H1 (cell line): ENCODE measurements at regions of chr9 and their contacts with region 1.

Region 1: GRCh38 chr9:133375724-133376654 is at the starts of genes STKLD1 and SURF4:
- DNase-seq: peak; percentile 81 to 99
- H3K4me3 ChIP-seq: peak within 1 kb of the TSS; percentile 70 to 87 (median 74)
- H3K27ac ChIP-seq: peak within 1 kb of the TSS; percentile 80
- H3K4me1 ChIP-seq: peaks cover 0 to 5% (median 0%) of the 10 kb centered on the region in 4 experiments; a peak in 1 of 7 replicates
- H3K27me3 ChIP-seq: peaks cover 0 to 11% (median 6%) of the 10 kb centered on the region in 4 experiments; a peak in 5 of 7 replicates
- CTCF ChIP-seq: no peak
- EP300 ChIP-seq: peak in 1 of 2 experiments; percentile 52; a peak in 1 of 3 replicates
- POLR2A ChIP-seq: peak in 1 of 2 experiments; percentile 82; a peak in 2 of 3 replicates
- RAD21 ChIP-seq: no peak
- total RNA-seq, gene STKLD1: not detected in 2 replicates
- total RNA-seq, gene SURF4: 167 and 182 TPM in 2 replicates

Region 2: DNA sequence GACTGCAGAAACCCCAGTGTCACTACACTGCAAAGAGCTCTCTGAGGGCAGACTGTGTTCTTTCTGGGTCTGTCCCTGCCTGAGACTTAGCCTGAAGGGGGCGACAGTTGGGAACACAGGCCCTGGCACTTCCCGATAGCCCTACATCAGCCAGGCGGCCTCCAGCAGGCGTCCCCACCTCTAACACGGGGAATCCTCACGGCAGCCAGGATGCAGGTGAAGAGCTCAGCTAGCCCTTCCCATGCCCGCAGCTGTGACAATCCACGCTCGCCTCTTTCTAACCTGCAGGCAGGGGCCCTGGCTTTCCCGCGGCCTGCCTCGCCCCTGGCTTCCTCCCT is 34.0 kb before region 1 on chr9:
- CTCF ChIA-PET with region 1: interaction called, 22 read pairs
- POLR2A ChIA-PET with region 1: interaction called, 461 read pairs
- DNase-seq: peak in 1 of 2 experiments; percentile 76
- H3K4me3 ChIP-seq: no peak overlapping the region
- H3K27ac ChIP-seq: no peak overlapping the region
- H3K4me1 ChIP-seq: peaks cover 0 to 7% (median 5%) of the 10 kb centered on the region in 4 experiments; a peak in 5 of 7 replicates
- H3K27me3 ChIP-seq: no peaks in the 10 kb centered on the region
- CTCF ChIP-seq: peak in 2 of 3 experiments; percentile 81 to 86; a peak in 3 of 4 replicates
- EP300 ChIP-seq: no peak
- POLR2A ChIP-seq: no peak
- RAD21 ChIP-seq: peak; percentile 19 to 33; a peak in 3 of 4 replicates

Region 3: DNA sequence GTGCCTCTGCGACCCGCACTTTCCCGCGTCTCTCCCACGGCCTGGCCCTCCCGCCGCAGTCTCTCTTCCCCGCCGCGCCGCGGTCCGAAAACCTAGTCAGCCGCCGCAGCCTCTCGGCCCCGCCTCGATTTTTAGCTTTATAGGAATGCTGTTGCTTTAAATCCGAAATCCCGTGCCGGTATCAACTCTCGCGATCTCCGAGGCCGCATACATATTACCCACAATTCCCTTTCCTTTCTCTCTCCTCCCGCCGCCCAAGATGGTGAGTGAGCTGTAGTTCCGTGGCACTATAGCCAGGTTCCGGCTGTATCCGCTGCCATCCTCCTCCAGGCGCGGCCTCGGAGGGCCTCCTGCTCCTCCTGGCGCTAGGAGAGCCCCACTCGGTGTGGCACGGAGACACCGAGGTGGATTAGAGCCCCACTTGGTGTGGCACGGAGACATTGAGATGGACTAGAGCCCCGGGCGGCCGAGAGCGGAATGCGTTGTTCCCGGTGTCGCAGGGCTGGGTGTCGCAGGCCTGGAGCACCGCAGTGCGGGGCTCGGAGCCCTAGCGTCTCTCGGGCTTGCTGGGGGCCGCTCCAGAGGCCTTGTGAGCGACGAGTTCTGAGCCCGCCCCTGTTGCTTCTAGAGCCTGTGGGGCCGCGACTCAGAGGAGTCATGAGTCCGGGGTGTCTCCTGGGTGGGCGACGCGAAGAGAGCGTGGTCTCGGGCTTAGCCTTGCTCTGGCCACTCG is 27.8 kb before region 1 on chr9 and contains the starts of genes MED22 and RPL7A:
- CTCF ChIA-PET with region 1: interaction called, 22 read pairs
- POLR2A ChIA-PET with region 1: interaction called, 461 read pairs
- DNase-seq: peak; percentile 77 to 93
- H3K4me3 ChIP-seq: peak within 1 kb of the TSS; percentile 93 to 100 (median 96)
- H3K27ac ChIP-seq: peak within 1 kb of the TSS; percentile 99
- H3K4me1 ChIP-seq: peaks cover 0 to 10% (median 7%) of the 10 kb centered on the region in 4 experiments; a peak in 6 of 7 replicates
- H3K27me3 ChIP-seq: no peaks in the 10 kb centered on the region
- CTCF ChIP-seq: no peak
- EP300 ChIP-seq: no peak
- POLR2A ChIP-seq: peak in 1 of 2 experiments; percentile 97; a peak in 1 of 3 replicates
- RAD21 ChIP-seq: no peak
- total RNA-seq, gene MED22: 56.4 and 61.8 TPM in 2 replicates
- total RNA-seq, gene RPL7A: 2,578 and 2,633 TPM in 2 replicates

Region 4: DNA sequence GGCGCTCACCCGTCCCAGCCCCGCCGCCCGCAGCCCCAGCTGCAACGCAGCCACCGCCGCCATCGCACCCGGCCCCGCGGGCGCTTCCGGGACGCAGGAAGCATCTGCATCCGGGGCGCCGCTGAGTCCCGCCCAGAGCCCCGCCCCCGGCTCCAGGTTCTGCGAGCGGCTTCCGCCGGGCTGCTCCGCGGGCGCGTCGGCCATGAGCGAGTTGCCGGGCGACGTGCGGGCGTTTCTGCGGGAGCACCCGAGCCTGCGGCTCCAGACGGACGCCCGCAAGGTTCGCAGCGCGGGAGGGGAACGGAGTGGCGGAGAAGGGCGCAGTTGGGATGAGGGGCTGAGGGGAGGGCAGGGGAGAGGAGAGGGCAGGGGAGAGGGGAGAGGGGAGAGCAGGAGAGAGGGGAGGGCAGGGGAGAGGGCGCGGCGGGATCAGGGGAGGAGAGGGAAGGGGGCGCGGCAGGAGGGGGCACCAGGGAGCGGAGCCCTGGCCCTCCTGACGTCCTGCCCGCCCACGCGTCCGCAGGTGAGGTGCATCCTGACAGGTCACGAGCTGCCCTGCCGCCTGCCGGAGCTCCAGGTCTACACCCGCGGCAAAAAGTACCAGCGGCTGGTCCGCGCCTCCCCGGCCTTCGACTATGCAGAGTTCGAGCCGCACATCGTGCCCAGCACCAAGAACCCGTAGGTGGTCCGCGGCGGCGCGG is 19.4 kb before region 1 on chr9 and contains the starts of genes SURF1 and SURF2:
- CTCF ChIA-PET with region 1: interaction called, 90 read pairs
- POLR2A ChIA-PET with region 1: interaction called, 461 read pairs
- DNase-seq: peak in 1 of 2 experiments; percentile 89
- H3K4me3 ChIP-seq: peak within 1 kb of the TSS; percentile 72 to 97 (median 96)
- H3K27ac ChIP-seq: no peak within 1 kb of the TSS
- H3K4me1 ChIP-seq: peaks cover 0 to 8% (median 3%) of the 10 kb centered on the region in 4 experiments; a peak in 5 of 7 replicates
- H3K27me3 ChIP-seq: no peaks in the 10 kb centered on the region
- CTCF ChIP-seq: peak in 1 of 3 experiments; percentile 12; a peak in 1 of 4 replicates
- EP300 ChIP-seq: no peak
- POLR2A ChIP-seq: peak in 1 of 2 experiments; percentile 77; a peak in 2 of 3 replicates
- RAD21 ChIP-seq: no peak
- total RNA-seq, gene SURF1: 39.6 and 43.1 TPM in 2 replicates
- total RNA-seq, gene SURF2: 36.6 and 42.1 TPM in 2 replicates

Region 5: GRCh38 chr9:133362359-133363044 is 13.5 kb before region 1 on chr9:
- CTCF ChIA-PET with region 1: interaction called, 90 read pairs
- POLR2A ChIA-PET with region 1: interaction called, 461 read pairs
- DNase-seq: no peak
- H3K4me3 ChIP-seq: no peak overlapping the region
- H3K27ac ChIP-seq: no peak overlapping the region
- H3K4me1 ChIP-seq: peaks cover 0 to 2% (median under 1%) of the 10 kb centered on the region in 4 experiments; a peak in 2 of 7 replicates
- H3K27me3 ChIP-seq: no peaks in the 10 kb centered on the region
- CTCF ChIP-seq: no peak
- EP300 ChIP-seq: no peak
- POLR2A ChIP-seq: no peak; a peak in 1 of 3 replicates
- RAD21 ChIP-seq: no peak

Region 6: GRCh38 chr9:133387425-133388079 is 11.6 kb after region 1 on chr9:
- CTCF ChIA-PET with region 1: interaction called, 11 read pairs
- POLR2A ChIA-PET with region 1: interaction called, 4 read pairs
- DNase-seq: no peak
- H3K4me3 ChIP-seq: no peak overlapping the region
- H3K27ac ChIP-seq: no peak overlapping the region
- H3K4me1 ChIP-seq: no peaks in the 10 kb centered on the region; a peak in 1 of 7 replicates
- H3K27me3 ChIP-seq: peaks cover 0 to 2% (median 0%) of the 10 kb centered on the region in 4 experiments; a peak in 2 of 7 replicates
- CTCF ChIP-seq: no peak
- EP300 ChIP-seq: no peak
- POLR2A ChIP-seq: no peak
- RAD21 ChIP-seq: no peak

Region 7: DNA sequence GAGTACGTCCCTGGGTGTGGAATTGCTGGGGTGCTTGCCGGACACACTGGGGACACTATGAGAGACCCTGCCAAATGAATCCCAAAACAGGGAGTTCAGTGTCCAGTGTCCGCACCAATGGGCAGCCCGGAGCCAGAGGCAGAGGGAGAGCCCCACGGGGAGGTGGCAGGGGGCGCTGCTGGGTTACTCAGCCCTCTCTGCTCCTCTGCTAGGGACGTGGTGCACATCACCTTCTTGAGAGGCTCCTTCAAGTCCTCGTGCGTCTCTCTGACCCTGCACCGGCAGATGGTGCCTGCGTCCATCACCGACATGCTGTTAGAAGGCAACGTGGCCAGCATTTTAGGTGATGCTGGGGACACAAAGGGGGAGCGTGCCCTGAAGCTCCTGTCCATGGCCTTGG is 21.0 kb after region 1 on chr9:
- CTCF ChIA-PET with region 1: interaction called, 33 read pairs
- POLR2A ChIA-PET with region 1: interaction called, 8 read pairs
- DNase-seq: peak in 1 of 2 experiments; percentile 81
- H3K4me3 ChIP-seq: no peak overlapping the region
- H3K27ac ChIP-seq: no peak overlapping the region
- H3K4me1 ChIP-seq: no peaks in the 10 kb centered on the region
- H3K27me3 ChIP-seq: no peaks in the 10 kb centered on the region; a peak in 3 of 7 replicates
- CTCF ChIP-seq: peak in 2 of 3 experiments; percentile 76 to 87; a peak in 3 of 4 replicates
- EP300 ChIP-seq: no peak
- POLR2A ChIP-seq: no peak
- RAD21 ChIP-seq: peak; percentile 53 to 58